Right cardiac atrium (tissue), 5 donors: ENCODE measurements at regions of chr13 and their contacts with region 1.

Region 1: DNA sequence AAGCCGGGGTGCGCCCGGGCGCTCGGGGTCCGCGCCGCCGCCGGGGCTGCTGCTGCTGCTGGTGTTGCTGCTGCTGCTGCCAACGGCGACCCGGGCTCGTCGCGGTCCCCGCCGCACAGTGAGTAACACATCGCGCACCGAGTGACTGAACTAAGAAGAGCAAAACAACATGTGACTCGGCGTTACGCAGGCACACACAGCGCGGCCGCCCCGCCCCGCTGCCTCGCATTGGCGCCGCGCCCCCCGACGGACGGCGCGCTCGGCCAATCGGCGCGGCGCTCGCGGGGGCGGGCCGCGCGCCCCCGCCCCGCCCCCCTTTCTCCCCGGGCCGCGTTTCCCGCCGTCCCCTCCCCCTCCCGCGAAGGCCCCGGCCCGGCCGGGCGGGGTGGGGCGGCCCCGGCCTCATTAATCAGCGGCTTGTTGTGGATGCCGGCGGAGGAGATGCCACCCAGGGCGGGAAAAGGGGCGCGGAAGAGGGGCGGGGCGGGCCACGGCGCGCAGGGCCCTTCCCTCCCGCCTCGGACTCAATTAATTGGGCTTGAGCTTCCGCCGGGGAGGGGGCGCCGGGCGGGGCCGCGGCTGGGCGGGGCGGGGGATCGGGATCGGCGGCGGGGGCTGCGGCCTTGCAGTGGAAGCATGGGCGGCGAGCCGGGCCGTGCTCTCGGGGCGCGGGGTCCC is at the start of gene IRS2:
- DNase-seq: peak; percentile 94 to 97 (median 96)
- ATAC-seq: peak; percentile 80 to 86
- H3K4me3 ChIP-seq: peak within 1 kb of the TSS; percentile 95
- H3K27ac ChIP-seq: peak within 1 kb of the TSS; percentile 88
- H3K4me1 ChIP-seq: peaks cover 2% of the 10 kb centered on the region
- H3K27me3 ChIP-seq: no peaks in the 10 kb centered on the region
- total RNA-seq, gene IRS2: 10.8 to 28.4 (median 14.6) TPM

Region 2: DNA sequence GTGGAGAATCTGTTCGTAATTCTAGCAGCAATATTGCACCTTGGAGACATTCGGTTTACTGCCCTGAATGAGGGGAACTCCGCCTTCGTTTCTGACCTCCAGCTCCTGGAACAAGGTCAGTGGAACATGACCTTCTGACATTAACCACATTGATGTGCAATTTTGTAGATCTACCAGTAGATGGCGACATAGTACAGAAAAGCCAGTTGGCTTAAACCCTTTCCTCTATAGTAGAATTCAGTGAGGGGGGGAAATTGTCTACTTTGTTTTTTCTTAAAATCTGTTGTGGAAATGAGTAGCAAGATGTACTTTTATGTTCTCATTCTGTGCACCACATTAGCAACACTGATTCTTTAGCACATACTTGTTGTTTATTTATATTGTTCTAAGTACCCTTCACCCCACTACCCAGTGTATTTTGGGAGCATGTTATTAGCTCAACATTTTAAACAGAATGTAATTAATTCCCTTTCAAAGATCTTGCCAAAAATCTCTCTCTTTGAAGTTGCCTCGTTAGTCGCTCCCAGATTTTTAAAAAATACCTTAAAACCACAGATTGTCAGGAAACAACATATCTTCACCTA is 825.0 kb before region 1 on chr13:
- intact Hi-C with region 1: loop called in 1 of 4 experiments (anchors 10 kb)
- DNase-seq: no peak
- ATAC-seq: peak; percentile 66 to 80
- H3K4me3 ChIP-seq: no peak overlapping the region
- H3K27ac ChIP-seq: no peak overlapping the region
- H3K4me1 ChIP-seq: no peaks in the 10 kb centered on the region
- H3K27me3 ChIP-seq: no peaks in the 10 kb centered on the region

Region 3: DNA sequence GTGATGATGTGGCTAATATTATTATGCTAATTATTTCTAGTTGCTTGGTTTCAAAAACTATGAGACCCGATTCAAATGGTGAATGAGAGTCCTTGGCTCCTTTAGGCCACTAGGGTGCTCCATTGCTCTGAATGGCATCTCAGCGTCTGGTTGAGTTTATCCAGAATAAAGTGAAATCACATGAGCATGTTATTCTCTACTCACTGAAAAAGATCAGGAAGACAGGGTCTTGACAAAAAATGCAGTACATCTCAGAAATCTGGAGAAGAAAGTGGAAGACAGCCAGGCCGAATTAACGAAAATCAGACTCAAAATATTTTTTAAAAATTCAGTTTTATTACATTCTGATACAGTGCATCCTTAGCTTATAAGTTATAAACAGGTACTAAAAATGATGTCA is 641.0 kb before region 1 on chr13:
- intact Hi-C with region 1: loop called in 3 of 4 experiments (anchors 10 kb)
- DNase-seq: peak in 1 of 3 donors; percentile 47
- ATAC-seq: peak; percentile 84 to 88
- H3K4me3 ChIP-seq: no peak overlapping the region
- H3K27ac ChIP-seq: no peak overlapping the region
- H3K4me1 ChIP-seq: no peaks in the 10 kb centered on the region
- H3K27me3 ChIP-seq: no peaks in the 10 kb centered on the region

Region 4: GRCh38 chr13:109610517-109610916 is 176.1 kb before region 1 on chr13:
- intact Hi-C with region 1: loop called in 1 of 4 experiments (anchors 10 kb)
- DNase-seq: peak; percentile 22 to 71 (median 70)
- ATAC-seq: peak; percentile 69 to 71
- H3K4me3 ChIP-seq: no peak overlapping the region
- H3K27ac ChIP-seq: no peak overlapping the region
- H3K4me1 ChIP-seq: no peaks in the 10 kb centered on the region
- H3K27me3 ChIP-seq: no peaks in the 10 kb centered on the region

Region 5: GRCh38 chr13:109869312-109870237 is 83.0 kb after region 1 on chr13:
- intact Hi-C with region 1: loop called in 1 of 4 experiments (anchors 5 kb)
- DNase-seq: peak; percentile 87 to 95 (median 93)
- ATAC-seq: peak; percentile 92 to 94
- H3K4me3 ChIP-seq: peak overlapping the region; percentile 41
- H3K27ac ChIP-seq: peak overlapping the region; percentile 63
- H3K4me1 ChIP-seq: peaks cover 6% of the 10 kb centered on the region
- H3K27me3 ChIP-seq: no peaks in the 10 kb centered on the region

Region 6: GRCh38 chr13:110108347-110109174 is 322.0 kb after region 1 on chr13:
- intact Hi-C with region 1: loop called (anchors 5 to 10 kb)
- DNase-seq: peak; percentile 86 to 93 (median 90)
- ATAC-seq: peak; percentile 93 to 94
- H3K4me3 ChIP-seq: no peak overlapping the region
- H3K27ac ChIP-seq: no peak overlapping the region
- H3K4me1 ChIP-seq: peaks cover 2% of the 10 kb centered on the region
- H3K27me3 ChIP-seq: no peaks in the 10 kb centered on the region